Natural killer cell (primary cell): ENCODE measurements at regions of chr18 and their contacts with region 1.

Region 1: GRCh38 chr18:9614401-9615279 is at the start of gene PPP4R1:
- DNase-seq: peak; percentile 63 to 77
- ATAC-seq: peak; percentile 81 to 88 (median 83)
- H3K4me3 ChIP-seq: peak within 1 kb of the TSS; percentile 56
- H3K4me3 Mint-ChIP-seq: peak within 1 kb of the TSS; percentile 96
- H3K27ac ChIP-seq: peak within 1 kb of the TSS; percentile 62
- H3K27ac Mint-ChIP-seq: peak within 1 kb of the TSS; percentile 90 to 91
- H3K4me1 ChIP-seq: peaks cover 10% of the 10 kb centered on the region
- H3K4me1 Mint-ChIP-seq: peaks cover 39 to 45% of the 10 kb centered on the region in 2 donors
- H3K27me3 ChIP-seq: no peaks in the 10 kb centered on the region
- H3K27me3 Mint-ChIP-seq: no peaks in the 10 kb centered on the region
- CTCF ChIP-seq: no peak
- total RNA-seq, gene PPP4R1: 60.5 to 108 (median 72.6) TPM

Region 2: DNA sequence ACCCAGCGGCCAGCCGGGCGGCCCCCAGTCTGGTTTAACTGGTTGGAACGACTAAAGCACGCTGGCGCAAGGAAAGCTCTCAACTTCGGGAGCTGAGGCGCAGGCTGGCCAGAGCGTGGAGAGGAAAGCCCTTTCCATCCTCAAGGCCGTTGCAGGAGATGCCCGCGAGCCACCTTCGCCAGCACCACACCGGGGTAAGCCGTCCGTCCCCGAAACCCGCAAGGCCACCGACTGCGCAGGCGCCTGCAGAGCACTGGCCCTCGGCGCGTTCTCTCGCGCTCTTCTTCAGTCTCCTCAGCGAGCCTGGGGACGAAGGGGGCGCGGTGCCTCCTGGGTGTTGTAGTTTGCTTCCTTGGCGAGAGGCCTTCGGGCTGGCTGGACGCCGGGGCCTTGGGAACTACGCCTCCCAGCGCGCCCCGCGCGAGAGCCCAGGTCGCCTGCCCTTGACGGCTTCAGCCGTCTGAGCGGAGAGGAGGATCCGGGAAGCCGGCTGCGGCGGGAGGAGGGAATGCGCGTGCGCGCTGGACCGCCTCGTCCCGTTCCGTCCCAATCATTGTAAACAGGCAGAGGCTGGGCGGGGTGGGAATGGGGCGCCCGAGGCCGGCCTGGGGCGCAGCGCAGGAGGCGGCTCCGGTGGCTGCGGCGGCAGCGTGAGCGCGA is 139.5 kb before region 1 on chr18 and contains the start of gene RALBP1:
- intact Hi-C with region 1: loop called (anchors 10 kb)
- DNase-seq: peak; percentile 96 to 98
- ATAC-seq: peak; percentile 96 to 100 (median 98)
- H3K4me3 ChIP-seq: peak within 1 kb of the TSS; percentile 79
- H3K4me3 Mint-ChIP-seq: peak within 1 kb of the TSS; percentile 99
- H3K27ac ChIP-seq: peak within 1 kb of the TSS; percentile 86
- H3K27ac Mint-ChIP-seq: peak within 1 kb of the TSS; percentile 88 to 98
- H3K4me1 ChIP-seq: peaks cover 23% of the 10 kb centered on the region
- H3K4me1 Mint-ChIP-seq: peaks cover 28 to 38% of the 10 kb centered on the region in 2 donors
- H3K27me3 ChIP-seq: peaks cover 4% of the 10 kb centered on the region
- H3K27me3 Mint-ChIP-seq: peaks cover 17 to 31% of the 10 kb centered on the region in 2 donors
- CTCF ChIP-seq: no peak
- total RNA-seq, gene RALBP1: 27.3 to 40.0 (median 33.4) TPM

Region 3: GRCh38 chr18:9673296-9674251 is 58.9 kb after region 1 on chr18:
- intact Hi-C with region 1: loop called (anchors 2 kb)
- DNase-seq: peak in 1 of 2 donors; percentile 44
- ATAC-seq: peak; percentile 66 to 92 (median 85)
- H3K4me3 ChIP-seq: no peak overlapping the region
- H3K4me3 Mint-ChIP-seq: no peak overlapping the region
- H3K27ac ChIP-seq: peak overlapping the region; percentile 47
- H3K27ac Mint-ChIP-seq: no peak overlapping the region
- H3K4me1 ChIP-seq: no peaks in the 10 kb centered on the region
- H3K4me1 Mint-ChIP-seq: peaks cover 6% of the 10 kb centered on the region in 2 donors
- H3K27me3 ChIP-seq: no peaks in the 10 kb centered on the region
- H3K27me3 Mint-ChIP-seq: peaks cover 11 to 20% of the 10 kb centered on the region in 2 donors
- CTCF ChIP-seq: no peak

Region 4: GRCh38 chr18:9771261-9771976 is 156.8 kb after region 1 on chr18:
- intact Hi-C with region 1: loop called (anchors 1 kb)
- DNase-seq: peak; percentile 57 to 66
- ATAC-seq: peak; percentile 86 to 98 (median 93)
- H3K4me3 ChIP-seq: no peak overlapping the region
- H3K4me3 Mint-ChIP-seq: no peak overlapping the region
- H3K27ac ChIP-seq: no peak overlapping the region
- H3K27ac Mint-ChIP-seq: peak overlapping the region in 1 of 2 donors; percentile 9
- H3K4me1 ChIP-seq: peaks cover 13% of the 10 kb centered on the region
- H3K4me1 Mint-ChIP-seq: peaks cover 8 to 11% of the 10 kb centered on the region in 2 donors
- H3K27me3 ChIP-seq: no peaks in the 10 kb centered on the region
- H3K27me3 Mint-ChIP-seq: peaks cover 12 to 21% of the 10 kb centered on the region in 2 donors
- CTCF ChIP-seq: peak; percentile 98